B cell (primary cell): ENCODE measurements at regions of chr3 and their contacts with region 1.

Region 1: GRCh38 chr3:151168269-151169094 is 34.5 kb downstream of the GPR171 start:
- DNase-seq: peak; percentile 69
- ATAC-seq: peak; percentile 31
- H3K4me3 ChIP-seq: no peak overlapping the region
- H3K4me3 Mint-ChIP-seq: no peak overlapping the region
- H3K27ac ChIP-seq: no peak overlapping the region
- H3K27ac Mint-ChIP-seq: no peak overlapping the region
- H3K4me1 ChIP-seq: peaks cover 35 to 38% of the 10 kb centered on the region in 2 donors
- H3K4me1 Mint-ChIP-seq: peaks cover 33% of the 10 kb centered on the region
- H3K27me3 ChIP-seq: no peaks in the 10 kb centered on the region
- H3K27me3 Mint-ChIP-seq: no peaks in the 10 kb centered on the region
- CTCF ChIP-seq: peak; percentile 79

Region 2: GRCh38 chr3:150925751-150926201 is 242.7 kb before region 1 on chr3:
- CTCF ChIA-PET with region 1: no interaction called
- POLR2A ChIA-PET with region 1: no interaction called
- intact Hi-C with region 1: no loop called
- DNase-seq: peak; percentile 54
- ATAC-seq: peak; percentile 66
- H3K4me3 ChIP-seq: peak overlapping the region in 3 of 5 experiments; percentile 31 to 43 (median 38)
- H3K4me3 Mint-ChIP-seq: peak overlapping the region; percentile 75
- H3K27ac ChIP-seq: no peak overlapping the region
- H3K27ac Mint-ChIP-seq: no peak overlapping the region
- H3K4me1 ChIP-seq: peaks cover 12 to 14% of the 10 kb centered on the region in 2 donors
- H3K4me1 Mint-ChIP-seq: peaks cover 12% of the 10 kb centered on the region
- H3K27me3 ChIP-seq: peaks cover 0 to 3% (median 0%) of the 10 kb centered on the region in 4 experiments
- H3K27me3 Mint-ChIP-seq: peaks cover 19% of the 10 kb centered on the region
- CTCF ChIP-seq: peak; percentile 77

Region 3: GRCh38 chr3:151156618-151157216 is 11.8 kb before region 1 on chr3:
- CTCF ChIA-PET with region 1: interaction called, 17 read pairs
- POLR2A ChIA-PET with region 1: no interaction called
- intact Hi-C with region 1: no loop called
- DNase-seq: peak; percentile 71
- ATAC-seq: peak; percentile 78
- H3K4me3 ChIP-seq: no peak overlapping the region
- H3K4me3 Mint-ChIP-seq: no peak overlapping the region
- H3K27ac ChIP-seq: no peak overlapping the region
- H3K27ac Mint-ChIP-seq: no peak overlapping the region
- H3K4me1 ChIP-seq: no peaks in the 10 kb centered on the region
- H3K4me1 Mint-ChIP-seq: no peaks in the 10 kb centered on the region
- H3K27me3 ChIP-seq: no peaks in the 10 kb centered on the region
- H3K27me3 Mint-ChIP-seq: no peaks in the 10 kb centered on the region
- CTCF ChIP-seq: peak; percentile 74

Region 4: GRCh38 chr3:151276687-151277042 is 108.2 kb after region 1 on chr3:
- CTCF ChIA-PET with region 1: interaction called, 201 read pairs
- POLR2A ChIA-PET with region 1: no interaction called
- intact Hi-C with region 1: loop called (anchors 1 kb)
- DNase-seq: peak; percentile 89
- ATAC-seq: peak; percentile 70
- H3K4me3 ChIP-seq: peak overlapping the region in 4 of 5 experiments; percentile 19 to 57 (median 48)
- H3K4me3 Mint-ChIP-seq: peak overlapping the region; percentile 82
- H3K27ac ChIP-seq: peak overlapping the region; percentile 91 to 96
- H3K27ac Mint-ChIP-seq: peak overlapping the region; percentile 98
- H3K4me1 ChIP-seq: peaks cover 69 to 76% of the 10 kb centered on the region in 2 donors
- H3K4me1 Mint-ChIP-seq: peaks cover 78% of the 10 kb centered on the region
- H3K27me3 ChIP-seq: no peaks in the 10 kb centered on the region
- H3K27me3 Mint-ChIP-seq: no peaks in the 10 kb centered on the region
- CTCF ChIP-seq: no peak

Region 5: GRCh38 chr3:151290673-151291072 is 122.2 kb after region 1 on chr3:
- CTCF ChIA-PET with region 1: interaction called, 36 read pairs
- POLR2A ChIA-PET with region 1: no interaction called
- intact Hi-C with region 1: no loop called
- DNase-seq: peak; percentile 26
- ATAC-seq: no peak
- H3K4me3 ChIP-seq: no peak overlapping the region
- H3K4me3 Mint-ChIP-seq: no peak overlapping the region
- H3K27ac ChIP-seq: no peak overlapping the region
- H3K27ac Mint-ChIP-seq: no peak overlapping the region
- H3K4me1 ChIP-seq: no peaks in the 10 kb centered on the region
- H3K4me1 Mint-ChIP-seq: no peaks in the 10 kb centered on the region
- H3K27me3 ChIP-seq: no peaks in the 10 kb centered on the region
- H3K27me3 Mint-ChIP-seq: no peaks in the 10 kb centered on the region
- CTCF ChIP-seq: peak; percentile 62

Region 6: DNA sequence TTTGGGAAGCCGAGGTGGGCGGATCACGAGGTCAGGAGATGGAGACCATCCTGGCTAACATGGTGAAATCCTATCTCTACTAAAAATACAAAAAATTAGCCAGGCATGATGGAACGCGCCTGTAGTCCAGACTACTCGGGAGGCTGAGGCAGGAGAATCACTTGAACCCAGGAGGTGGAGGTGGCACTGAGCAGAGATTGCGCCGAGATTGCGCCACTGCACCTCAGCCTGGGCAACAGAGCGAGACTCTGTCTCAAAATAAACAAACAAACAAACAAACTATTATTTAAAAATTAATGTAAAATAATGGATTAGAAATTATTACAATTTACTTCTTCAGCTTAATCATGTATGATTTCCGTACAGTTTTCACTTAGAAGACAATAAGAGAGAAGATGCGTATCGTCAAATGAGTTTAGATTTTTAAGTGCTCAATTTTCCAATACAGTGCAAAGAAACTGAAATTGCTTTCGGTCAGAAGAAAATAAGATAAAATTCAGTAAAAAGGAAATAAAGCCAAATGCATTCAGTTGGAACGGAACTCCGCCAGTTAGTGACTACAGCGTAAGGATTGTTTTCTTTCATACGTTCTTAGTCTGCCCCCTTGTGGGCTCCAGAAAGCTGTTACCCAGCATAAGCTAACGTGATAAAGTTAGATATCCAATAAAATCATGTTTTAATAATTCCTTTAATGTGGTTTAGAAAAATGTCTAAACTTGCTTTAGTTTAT is 670.3 kb after region 1 on chr3:
- CTCF ChIA-PET with region 1: interaction called, 12 read pairs
- POLR2A ChIA-PET with region 1: no interaction called
- intact Hi-C with region 1: loop called (anchors 1 kb)
- DNase-seq: peak; percentile 69
- ATAC-seq: peak; percentile 65
- H3K4me3 ChIP-seq: no peak overlapping the region
- H3K4me3 Mint-ChIP-seq: no peak overlapping the region
- H3K27ac ChIP-seq: no peak overlapping the region
- H3K27ac Mint-ChIP-seq: no peak overlapping the region
- H3K4me1 ChIP-seq: no peaks in the 10 kb centered on the region
- H3K4me1 Mint-ChIP-seq: peaks cover 3% of the 10 kb centered on the region
- H3K27me3 ChIP-seq: no peaks in the 10 kb centered on the region
- H3K27me3 Mint-ChIP-seq: peaks cover 5% of the 10 kb centered on the region
- CTCF ChIP-seq: peak; percentile 83